Activated B cell treated with CpG ODN at 0.5 μM for 24 hours (primary cell): ENCODE measurements at regions of chr17 and their contacts with region 1.

Region 1: GRCh38 chr17:45218895-45219661 is 2.6 kb upstream of the FMNL1 start:
- DNase-seq: peak; percentile 83
- ATAC-seq: peak; percentile 29
- H3K4me3 Mint-ChIP-seq: peak overlapping the region; percentile 82
- H3K27ac Mint-ChIP-seq: peak overlapping the region; percentile 54
- H3K4me1 Mint-ChIP-seq: peaks cover 40% of the 10 kb centered on the region
- H3K27me3 Mint-ChIP-seq: no peaks in the 10 kb centered on the region
- CTCF ChIP-seq: peak; percentile 95

Region 2: GRCh38 chr17:44894642-44895041 is 324.4 kb before region 1 on chr17:
- CTCF ChIA-PET with region 1: no interaction called
- POLR2A ChIA-PET with region 1: no interaction called
- intact Hi-C with region 1: no loop called
- DNase-seq: no peak
- ATAC-seq: no peak
- H3K4me3 Mint-ChIP-seq: no peak overlapping the region
- H3K27ac Mint-ChIP-seq: no peak overlapping the region
- H3K4me1 Mint-ChIP-seq: peaks cover 27% of the 10 kb centered on the region
- H3K27me3 Mint-ChIP-seq: no peaks in the 10 kb centered on the region
- CTCF ChIP-seq: no peak

Region 3: GRCh38 chr17:45110668-45111611 is 108.1 kb before region 1 on chr17:
- CTCF ChIA-PET with region 1: no interaction called
- POLR2A ChIA-PET with region 1: no interaction called
- intact Hi-C with region 1: no loop called
- DNase-seq: no peak
- ATAC-seq: no peak
- H3K4me3 Mint-ChIP-seq: no peak overlapping the region
- H3K27ac Mint-ChIP-seq: no peak overlapping the region
- H3K4me1 Mint-ChIP-seq: peaks cover 13% of the 10 kb centered on the region
- H3K27me3 Mint-ChIP-seq: no peaks in the 10 kb centered on the region
- CTCF ChIP-seq: no peak

Region 4: GRCh38 chr17:45172454-45173286 is 46.4 kb before region 1 on chr17:
- CTCF ChIA-PET with region 1: interaction called, 6 read pairs
- POLR2A ChIA-PET with region 1: interaction called, 10 read pairs
- intact Hi-C with region 1: no loop called
- DNase-seq: peak; percentile 52
- ATAC-seq: peak; percentile 91
- H3K4me3 Mint-ChIP-seq: peak overlapping the region; percentile 80
- H3K27ac Mint-ChIP-seq: peak overlapping the region; percentile 93
- H3K4me1 Mint-ChIP-seq: peaks cover 14% of the 10 kb centered on the region
- H3K27me3 Mint-ChIP-seq: no peaks in the 10 kb centered on the region
- CTCF ChIP-seq: no peak

Region 5: GRCh38 chr17:45247429-45248131 is 28.5 kb after region 1 on chr17:
- CTCF ChIA-PET with region 1: interaction called, 13 read pairs
- POLR2A ChIA-PET with region 1: interaction called, 60 read pairs
- intact Hi-C with region 1: loop called (anchors 1 kb)
- DNase-seq: peak; percentile 87
- ATAC-seq: peak; percentile 92
- H3K4me3 Mint-ChIP-seq: peak overlapping the region; percentile 90
- H3K27ac Mint-ChIP-seq: peak overlapping the region; percentile 92
- H3K4me1 Mint-ChIP-seq: peaks cover 34% of the 10 kb centered on the region
- H3K27me3 Mint-ChIP-seq: no peaks in the 10 kb centered on the region
- CTCF ChIP-seq: no peak

Region 6: GRCh38 chr17:45277216-45277849 is 58.3 kb after region 1 on chr17:
- CTCF ChIA-PET with region 1: interaction called, 60 read pairs
- POLR2A ChIA-PET with region 1: interaction called, 12 read pairs
- intact Hi-C with region 1: loop called (anchors 1 kb)
- DNase-seq: peak; percentile 76
- ATAC-seq: peak; percentile 98
- H3K4me3 Mint-ChIP-seq: no peak overlapping the region
- H3K27ac Mint-ChIP-seq: peak overlapping the region; percentile 21
- H3K4me1 Mint-ChIP-seq: peaks cover 5% of the 10 kb centered on the region
- H3K27me3 Mint-ChIP-seq: no peaks in the 10 kb centered on the region
- CTCF ChIP-seq: no peak

Region 7: GRCh38 chr17:45377401-45377800 is 158.3 kb after region 1 on chr17:
- CTCF ChIA-PET with region 1: interaction called, 4 read pairs
- POLR2A ChIA-PET with region 1: interaction called, 12 read pairs
- intact Hi-C with region 1: no loop called
- DNase-seq: no peak
- ATAC-seq: no peak
- H3K4me3 Mint-ChIP-seq: no peak overlapping the region
- H3K27ac Mint-ChIP-seq: no peak overlapping the region
- H3K4me1 Mint-ChIP-seq: peaks cover 22% of the 10 kb centered on the region
- H3K27me3 Mint-ChIP-seq: no peaks in the 10 kb centered on the region
- CTCF ChIP-seq: no peak

Region 8: GRCh38 chr17:45414990-45415881 is 196.2 kb after region 1 on chr17:
- CTCF ChIA-PET with region 1: no interaction called
- POLR2A ChIA-PET with region 1: no interaction called
- intact Hi-C with region 1: no loop called
- DNase-seq: no peak
- ATAC-seq: no peak
- H3K4me3 Mint-ChIP-seq: no peak overlapping the region
- H3K27ac Mint-ChIP-seq: no peak overlapping the region
- H3K4me1 Mint-ChIP-seq: peaks cover 48% of the 10 kb centered on the region
- H3K27me3 Mint-ChIP-seq: no peaks in the 10 kb centered on the region
- CTCF ChIP-seq: no peak